ENCODE measurements at regions of chr2 and their contacts with region 1.

Region 1: DNA sequence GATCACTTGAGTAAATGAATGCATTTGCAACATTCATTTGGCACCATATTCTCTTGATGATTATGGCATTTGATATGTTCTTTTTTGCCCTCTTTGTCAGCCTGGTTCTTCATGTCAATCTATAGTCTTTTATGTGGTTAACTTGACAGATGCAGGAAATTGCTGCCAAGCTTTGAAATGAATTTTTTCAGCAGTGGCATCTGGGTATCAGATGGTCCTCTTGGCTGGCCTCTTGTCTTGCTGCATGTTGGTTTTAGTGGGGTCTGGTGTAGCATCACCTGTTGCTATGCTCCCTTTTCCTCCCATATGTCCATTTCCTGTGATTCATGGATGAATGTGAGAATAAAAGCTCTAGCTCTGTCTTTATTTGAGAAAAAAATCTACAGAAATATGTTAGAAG is 119.9 kb downstream of the DPP4 start:
- DNase-seq: peak; percentile 50
- ATAC-seq: peak; percentile 35
- H3K4me3 Mint-ChIP-seq: peak overlapping the region; percentile 13
- H3K27ac Mint-ChIP-seq: peak overlapping the region; percentile 96
- H3K4me1 Mint-ChIP-seq: peaks cover 70% of the 10 kb centered on the region
- H3K27me3 Mint-ChIP-seq: no peaks in the 10 kb centered on the region

Region 2: DNA sequence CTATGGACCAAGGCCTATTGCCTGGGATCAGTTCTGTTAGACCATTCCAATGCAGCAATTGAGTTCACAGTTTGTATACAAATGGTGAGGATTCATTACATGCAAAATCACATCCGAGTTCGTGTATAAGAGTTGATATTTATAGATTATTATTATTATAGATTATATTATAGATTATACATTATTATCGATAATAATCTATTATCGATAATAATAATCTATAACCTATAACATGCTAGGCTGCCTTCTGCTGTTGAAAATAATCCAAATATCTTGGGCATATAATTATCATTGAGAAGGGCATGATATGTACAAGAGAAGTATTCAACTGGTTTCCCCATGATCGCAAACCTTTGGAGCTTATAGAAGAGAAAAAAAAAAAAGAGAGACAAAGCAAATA is 15.8 kb before region 1 on chr2:
- CTCF ChIA-PET with region 1: no interaction called
- POLR2A ChIA-PET with region 1: no interaction called
- DNase-seq: no peak
- ATAC-seq: no peak
- H3K4me3 Mint-ChIP-seq: no peak overlapping the region
- H3K27ac Mint-ChIP-seq: no peak overlapping the region
- H3K4me1 Mint-ChIP-seq: peaks cover 3% of the 10 kb centered on the region
- H3K27me3 Mint-ChIP-seq: peaks cover 14% of the 10 kb centered on the region

Region 3: GRCh38 chr2:161972866-161973265 is 18.8 kb after region 1 on chr2:
- CTCF ChIA-PET with region 1: interaction called, 20 read pairs
- POLR2A ChIA-PET with region 1: interaction called, 13 read pairs
- DNase-seq: no peak
- ATAC-seq: no peak
- H3K4me3 Mint-ChIP-seq: no peak overlapping the region
- H3K27ac Mint-ChIP-seq: no peak overlapping the region
- H3K4me1 Mint-ChIP-seq: peaks cover 78% of the 10 kb centered on the region
- H3K27me3 Mint-ChIP-seq: no peaks in the 10 kb centered on the region

Region 4: DNA sequence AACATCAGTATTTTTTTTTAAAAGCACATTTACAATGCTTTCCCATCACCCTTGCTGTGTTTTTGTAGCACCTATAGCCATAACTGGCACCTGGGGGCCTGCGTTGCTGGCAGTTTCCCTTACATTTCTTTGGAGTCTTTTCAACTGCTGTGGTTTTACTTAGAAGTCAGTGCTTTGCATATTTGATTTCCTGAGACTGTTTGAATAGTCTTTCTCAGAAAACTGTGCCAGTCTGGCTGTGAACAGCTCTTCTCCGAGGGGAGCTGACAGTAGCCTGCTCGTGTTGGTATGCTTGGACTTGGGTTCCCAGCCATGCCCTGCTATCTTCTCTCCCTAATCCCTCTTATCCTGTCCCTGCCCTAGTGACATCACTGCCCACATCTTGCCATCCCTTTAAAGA is 38.4 kb after region 1 on chr2:
- CTCF ChIA-PET with region 1: interaction called, 85 read pairs
- POLR2A ChIA-PET with region 1: interaction called, 140 read pairs
- DNase-seq: peak; percentile 81
- ATAC-seq: peak; percentile 89
- H3K4me3 Mint-ChIP-seq: peak overlapping the region; percentile 77
- H3K27ac Mint-ChIP-seq: peak overlapping the region; percentile 96
- H3K4me1 Mint-ChIP-seq: peaks cover 83% of the 10 kb centered on the region
- H3K27me3 Mint-ChIP-seq: no peaks in the 10 kb centered on the region

Region 5: DNA sequence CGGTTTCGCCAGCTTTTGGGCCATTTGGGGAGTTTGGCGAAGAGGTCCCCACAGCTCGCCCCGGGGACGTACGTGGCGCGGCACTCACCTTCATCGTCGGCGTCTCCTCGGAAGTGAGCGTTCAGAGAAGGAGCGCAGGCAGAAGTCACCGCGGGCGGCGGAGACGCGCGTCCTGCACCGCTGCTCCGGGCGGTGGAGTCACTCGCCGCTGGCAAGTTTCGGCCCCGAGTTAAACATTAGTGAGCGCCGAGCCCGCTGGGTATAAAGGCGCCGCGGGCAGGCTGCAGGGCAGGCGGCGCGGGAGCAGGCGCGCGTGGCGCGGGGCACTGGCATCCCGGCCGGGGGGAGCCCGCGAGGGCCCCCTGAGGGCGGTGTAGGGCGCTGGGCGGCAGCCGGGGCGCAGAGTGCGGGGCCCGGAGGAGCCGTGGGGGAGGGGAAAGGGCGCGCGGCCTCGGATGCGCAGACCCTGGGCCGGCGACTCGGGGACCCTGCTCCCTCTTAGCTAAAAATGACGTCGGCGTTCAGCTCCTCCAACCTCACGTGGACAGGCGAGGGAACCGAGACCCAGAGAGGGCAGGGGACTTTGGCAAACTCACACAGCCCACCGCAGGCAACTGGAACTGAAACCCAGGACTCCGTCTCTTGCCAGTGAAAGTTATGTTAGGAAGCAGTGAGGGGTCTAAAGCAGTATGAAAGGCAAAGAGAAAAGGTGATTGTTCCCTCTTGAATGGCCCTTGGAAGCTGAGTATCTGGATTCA is 120.0 kb after region 1 on chr2 and contains the start of gene DPP4:
- CTCF ChIA-PET with region 1: interaction called, 21 read pairs
- POLR2A ChIA-PET with region 1: interaction called, 30 read pairs
- DNase-seq: peak; percentile 66
- ATAC-seq: peak; percentile 83
- H3K4me3 Mint-ChIP-seq: peak within 1 kb of the TSS; percentile 95
- H3K27ac Mint-ChIP-seq: peak within 1 kb of the TSS; percentile 93
- H3K4me1 Mint-ChIP-seq: peaks cover 44% of the 10 kb centered on the region
- H3K27me3 Mint-ChIP-seq: no peaks in the 10 kb centered on the region
- total RNA-seq, gene DPP4: 158 TPM

Measured in activated CD8-positive, alpha-beta T cell treated with anti-CD3 and anti-CD28 coated beads, Interleukin-2, amount 10 ng/mL, durations not matched to agents 7 days and 5 days (primary cell).